ENCODE measurements at regions of chr6 and their contacts with region 1.

Region 1: DNA sequence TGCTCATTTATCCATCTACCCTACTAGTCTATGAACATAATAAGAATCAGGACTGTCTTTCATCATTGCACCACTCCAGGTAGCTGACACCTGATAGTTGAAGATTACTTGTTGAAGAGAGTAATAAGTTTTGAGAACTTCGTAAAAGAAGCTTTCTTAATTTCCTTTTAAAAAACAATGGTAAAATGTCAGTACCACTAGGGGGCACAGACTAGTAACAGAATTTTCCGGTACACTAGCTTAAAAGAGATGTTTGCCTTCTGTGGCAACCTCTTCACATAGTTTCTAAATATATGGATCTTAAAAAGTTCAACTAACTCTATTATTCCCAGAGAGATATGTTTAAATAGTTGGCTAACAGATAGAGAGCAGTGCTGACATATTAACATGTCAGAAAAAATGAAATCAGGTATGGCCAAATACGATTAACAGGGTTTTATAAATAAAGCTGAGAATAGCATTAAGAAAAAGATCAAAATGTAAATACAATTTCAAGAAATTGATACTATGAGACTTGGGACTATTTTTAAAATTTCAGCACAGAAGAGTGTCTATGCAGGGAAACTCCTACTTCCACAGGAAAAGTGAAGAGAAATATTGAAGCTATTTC is 5.4 kb upstream of the KCNQ5 start:
- DNase-seq: no peak
- H3K4me3 Mint-ChIP-seq: no peak overlapping the region
- H3K27ac Mint-ChIP-seq: no peak overlapping the region
- H3K4me1 Mint-ChIP-seq: peaks cover 10% of the 10 kb centered on the region
- H3K27me3 Mint-ChIP-seq: no peaks in the 10 kb centered on the region
- CTCF ChIP-seq: peak; percentile 42

Region 2: GRCh38 chr6:73129653-73130443 is 513.3 kb after region 1 on chr6:
- CTCF ChIA-PET with region 1: interaction called, 38 read pairs
- intact Hi-C with region 1: loop called (anchors 1 kb)
- DNase-seq: peak; percentile 89
- H3K4me3 Mint-ChIP-seq: peak overlapping the region; percentile 50
- H3K27ac Mint-ChIP-seq: no peak overlapping the region
- H3K4me1 Mint-ChIP-seq: no peaks in the 10 kb centered on the region
- H3K27me3 Mint-ChIP-seq: no peaks in the 10 kb centered on the region
- CTCF ChIP-seq: peak; percentile 97

Region 3: DNA sequence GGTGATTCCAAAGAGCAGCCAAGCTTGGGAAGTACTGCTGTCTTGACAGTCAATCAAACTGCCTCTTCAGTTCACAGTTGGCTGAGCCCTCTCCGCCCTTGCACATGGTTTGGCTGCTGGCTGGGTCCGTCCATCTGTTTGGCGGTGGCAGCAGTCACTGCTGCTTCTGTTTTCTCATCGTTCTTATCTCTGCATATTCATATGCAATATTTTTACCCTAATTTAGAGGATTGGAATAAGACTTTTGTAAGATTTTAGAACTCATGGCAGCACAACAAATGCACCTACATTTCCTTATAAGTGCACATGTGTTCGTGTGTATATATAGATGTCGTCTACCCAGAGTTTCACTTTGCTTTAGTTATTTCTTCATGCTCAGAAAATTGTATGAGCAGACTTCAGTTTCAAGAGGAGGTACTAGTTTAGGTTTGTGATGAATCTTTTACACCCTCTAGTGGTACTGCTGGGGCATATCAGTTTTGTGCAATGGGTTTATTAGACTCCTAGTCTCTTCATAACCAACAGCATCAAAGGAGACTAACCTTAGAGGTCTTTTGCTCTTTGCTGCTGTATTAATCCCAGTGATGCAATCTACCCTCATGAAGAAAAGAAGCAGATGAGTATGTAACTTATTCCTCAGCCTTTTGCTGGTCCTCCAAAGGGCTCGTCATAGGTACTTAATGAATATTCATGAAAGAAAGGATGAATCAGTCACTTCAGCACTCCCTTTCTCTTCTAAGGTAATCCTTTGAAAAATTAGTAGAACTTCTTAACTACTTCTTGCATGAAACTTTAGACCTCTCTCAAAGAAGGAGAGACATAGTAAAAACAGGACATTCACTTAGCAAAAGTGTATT is 564.5 kb after region 1 on chr6:
- CTCF ChIA-PET with region 1: interaction called, 4 read pairs
- intact Hi-C with region 1: loop called (anchors 1 kb)
- DNase-seq: peak; percentile 26
- H3K4me3 Mint-ChIP-seq: peak overlapping the region; percentile 41
- H3K27ac Mint-ChIP-seq: no peak overlapping the region
- H3K4me1 Mint-ChIP-seq: no peaks in the 10 kb centered on the region
- H3K27me3 Mint-ChIP-seq: peaks cover 26% of the 10 kb centered on the region
- CTCF ChIP-seq: peak; percentile 58

Region 4: GRCh38 chr6:73329201-73329600 is 712.7 kb after region 1 on chr6:
- CTCF ChIA-PET with region 1: interaction called, 4 read pairs
- intact Hi-C with region 1: loop called (anchors 2 kb)
- DNase-seq: no peak
- H3K4me3 Mint-ChIP-seq: no peak overlapping the region
- H3K27ac Mint-ChIP-seq: no peak overlapping the region
- H3K4me1 Mint-ChIP-seq: no peaks in the 10 kb centered on the region
- H3K27me3 Mint-ChIP-seq: peaks cover 37% of the 10 kb centered on the region
- CTCF ChIP-seq: no peak

Measured in Calu3 (cell line).